SK-N-SH (cell line): ENCODE measurements at regions of chr17 and their contacts with region 1.

Region 1: DNA sequence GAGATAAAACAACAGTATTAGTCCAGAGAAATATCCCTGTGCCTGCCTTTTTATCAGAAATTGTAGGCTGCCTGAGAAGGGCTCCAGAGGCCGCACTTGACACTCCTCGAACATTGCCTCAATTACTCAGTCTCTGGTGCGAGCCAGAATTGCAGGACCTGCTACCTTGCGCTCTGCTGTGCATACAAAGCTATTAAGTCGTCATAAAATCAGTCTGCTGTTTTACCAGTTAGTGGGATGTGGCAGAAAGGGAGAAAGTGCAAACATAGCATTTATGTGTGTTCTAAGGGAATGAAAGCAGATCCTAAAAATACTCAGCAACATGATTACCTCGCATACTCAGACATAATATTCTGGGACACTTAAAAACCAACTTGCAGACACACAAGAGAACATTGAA is 70.6 kb downstream of the TMC6 start:
- DNase-seq: no peak
- H3K4me3 ChIP-seq: no peak overlapping the region
- H3K27ac ChIP-seq: peak overlapping the region in 1 of 2 experiments; percentile 69; a peak in 1 of 4 replicates
- H3K4me1 ChIP-seq: peaks cover 5 to 10% of the 10 kb centered on the region in 2 experiments; a peak in 2 of 4 replicates
- H3K27me3 ChIP-seq: no peaks in the 10 kb centered on the region
- CTCF ChIP-seq: no peak
- EP300 ChIP-seq: no peak
- RAD21 ChIP-seq: no peak

Region 2: GRCh38 chr17:77942112-77942988 is 115.7 kb before region 1 on chr17:
- CTCF ChIA-PET with region 1: no interaction called
- POLR2A ChIA-PET with region 1: no interaction called
- DNase-seq: no peak
- H3K4me3 ChIP-seq: no peak overlapping the region
- H3K27ac ChIP-seq: no peak overlapping the region
- H3K4me1 ChIP-seq: no peaks in the 10 kb centered on the region
- H3K27me3 ChIP-seq: peaks cover 42% of the 10 kb centered on the region; the same call in 1 of the 2 replicates
- CTCF ChIP-seq: no peak
- EP300 ChIP-seq: no peak
- RAD21 ChIP-seq: no peak

Region 3: DNA sequence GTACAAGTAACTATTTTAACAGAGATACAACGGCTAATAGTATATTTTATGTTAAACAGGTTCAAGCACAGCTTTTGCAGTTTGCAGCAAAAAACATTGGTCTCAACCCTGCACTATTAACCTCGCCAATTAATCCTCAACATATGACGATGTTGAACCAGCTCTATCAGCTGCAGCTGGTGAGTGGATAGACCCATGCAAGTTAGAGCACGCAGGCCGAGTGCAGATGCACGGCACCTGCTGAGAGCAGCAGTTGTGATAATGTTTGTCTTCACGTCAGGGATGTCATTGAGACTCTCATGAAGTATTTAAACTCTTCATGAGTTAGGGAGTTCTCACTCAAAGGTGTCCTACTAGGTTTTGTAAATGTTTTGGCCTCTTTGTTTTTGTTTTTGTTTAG is 25.0 kb after region 1 on chr17:
- CTCF ChIA-PET with region 1: interaction called, 42 read pairs
- POLR2A ChIA-PET with region 1: no interaction called
- DNase-seq: no peak
- H3K4me3 ChIP-seq: no peak overlapping the region
- H3K27ac ChIP-seq: no peak overlapping the region
- H3K4me1 ChIP-seq: no peaks in the 10 kb centered on the region
- H3K27me3 ChIP-seq: no peaks in the 10 kb centered on the region
- CTCF ChIP-seq: no peak
- EP300 ChIP-seq: no peak
- RAD21 ChIP-seq: no peak